ENCODE measurements at regions of chr9 and their contacts with region 1.

Region 1: DNA sequence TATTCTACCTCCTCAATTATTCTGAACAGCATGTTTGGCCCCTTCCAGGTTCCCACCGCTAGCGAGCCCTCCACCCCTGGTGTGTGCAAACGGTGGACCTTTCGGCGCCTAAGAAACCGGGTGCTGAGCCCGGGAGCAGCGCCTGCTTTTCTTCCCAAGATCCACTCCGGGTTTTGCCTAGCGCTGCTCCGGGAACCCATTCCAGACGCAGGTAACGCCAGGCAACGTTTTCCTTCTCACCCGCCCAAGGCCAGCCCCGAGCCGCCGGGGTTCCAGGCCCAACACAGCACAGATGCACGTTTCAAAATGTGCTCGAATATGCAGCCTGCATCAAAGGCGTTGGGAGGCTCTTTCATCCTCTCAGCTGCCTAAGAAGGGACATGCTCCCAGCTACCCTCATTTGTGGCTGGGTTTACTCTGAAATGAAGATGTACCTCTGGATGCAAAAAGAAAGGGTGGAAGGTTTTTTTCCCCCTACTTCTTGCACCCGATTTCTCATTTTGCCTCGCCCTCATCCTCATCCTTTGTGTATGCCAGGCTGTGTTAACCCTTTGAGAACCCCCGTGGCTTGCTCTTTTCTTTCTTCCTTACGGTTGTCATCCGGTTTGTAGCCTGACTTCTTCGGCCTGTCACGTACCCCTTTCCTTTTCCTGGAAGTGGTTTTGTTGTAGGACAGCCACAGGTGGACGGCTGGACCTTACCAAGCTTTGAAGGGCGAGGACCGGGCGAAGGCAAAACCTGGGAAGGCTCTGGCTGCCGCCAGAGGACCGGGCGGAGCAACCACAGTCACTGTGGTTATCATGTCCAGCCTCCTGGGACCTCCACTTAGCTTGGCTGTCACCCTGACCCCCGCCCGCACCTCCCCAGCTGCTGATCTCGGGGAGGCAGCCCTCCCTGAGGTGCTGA is 226.9 kb downstream of the SMARCA2 start:
- DNase-seq: peak; percentile 65 to 85
- H3K4me3 ChIP-seq: peak overlapping the region; percentile 39
- H3K4me3 Mint-ChIP-seq: peak overlapping the region; percentile 75
- H3K27ac Mint-ChIP-seq: peak overlapping the region; percentile 62
- H3K4me1 ChIP-seq: peaks cover 6% of the 10 kb centered on the region
- H3K4me1 Mint-ChIP-seq: peaks cover 13% of the 10 kb centered on the region
- H3K27me3 ChIP-seq: no peaks in the 10 kb centered on the region
- H3K27me3 Mint-ChIP-seq: no peaks in the 10 kb centered on the region
- CTCF ChIP-seq: no peak

Region 2: GRCh38 chr9:2281031-2281802 is 39.1 kb after region 1 on chr9:
- CTCF ChIA-PET with region 1: no interaction called
- POLR2A ChIA-PET with region 1: no interaction called
- intact Hi-C with region 1: loop called (anchors 2 kb)
- DNase-seq: peak; percentile 68
- H3K4me3 ChIP-seq: no peak overlapping the region
- H3K4me3 Mint-ChIP-seq: no peak overlapping the region
- H3K27ac Mint-ChIP-seq: no peak overlapping the region
- H3K4me1 ChIP-seq: peaks cover 19% of the 10 kb centered on the region
- H3K4me1 Mint-ChIP-seq: no peaks in the 10 kb centered on the region
- H3K27me3 ChIP-seq: no peaks in the 10 kb centered on the region
- H3K27me3 Mint-ChIP-seq: no peaks in the 10 kb centered on the region
- CTCF ChIP-seq: no peak

Region 3: DNA sequence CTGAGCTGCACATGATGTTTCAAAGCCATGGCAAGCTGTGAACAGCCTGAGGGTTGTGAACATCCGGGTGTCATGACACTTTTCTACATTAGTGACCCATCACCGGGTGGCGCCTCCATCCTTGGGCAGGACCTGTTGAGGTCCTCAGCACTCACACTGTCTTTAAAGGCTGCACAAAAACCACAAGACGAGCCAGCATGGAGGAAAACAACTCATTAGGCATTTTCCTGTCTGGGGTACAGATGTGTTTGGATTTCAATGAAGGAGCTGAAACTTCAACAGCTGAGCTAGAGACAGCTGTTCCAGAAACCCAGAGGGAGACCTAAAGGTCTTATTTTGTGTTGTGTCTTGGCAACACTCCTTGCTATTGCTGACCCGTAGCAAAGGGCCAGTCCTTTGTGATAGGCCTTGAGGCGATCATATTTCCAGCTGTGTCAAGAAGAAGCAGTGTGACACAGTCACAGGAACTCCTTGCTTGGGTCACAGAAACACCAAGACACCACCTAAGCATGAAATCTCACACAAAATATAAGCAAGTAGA is 227.7 kb after region 1 on chr9:
- CTCF ChIA-PET with region 1: no interaction called
- POLR2A ChIA-PET with region 1: no interaction called
- intact Hi-C with region 1: loop called (anchors 5 kb)
- DNase-seq: peak; percentile 50 to 57
- H3K4me3 ChIP-seq: no peak overlapping the region
- H3K4me3 Mint-ChIP-seq: no peak overlapping the region
- H3K27ac Mint-ChIP-seq: no peak overlapping the region
- H3K4me1 ChIP-seq: peaks cover 14% of the 10 kb centered on the region
- H3K4me1 Mint-ChIP-seq: peaks cover 6% of the 10 kb centered on the region
- H3K27me3 ChIP-seq: no peaks in the 10 kb centered on the region
- H3K27me3 Mint-ChIP-seq: no peaks in the 10 kb centered on the region
- CTCF ChIP-seq: peak; percentile 17 to 32

Measured in Caco-2 (cell line).